Heart right ventricle (tissue), 16 donors: ENCODE measurements at regions of chr19 and their contacts with region 1.

Region 1: DNA sequence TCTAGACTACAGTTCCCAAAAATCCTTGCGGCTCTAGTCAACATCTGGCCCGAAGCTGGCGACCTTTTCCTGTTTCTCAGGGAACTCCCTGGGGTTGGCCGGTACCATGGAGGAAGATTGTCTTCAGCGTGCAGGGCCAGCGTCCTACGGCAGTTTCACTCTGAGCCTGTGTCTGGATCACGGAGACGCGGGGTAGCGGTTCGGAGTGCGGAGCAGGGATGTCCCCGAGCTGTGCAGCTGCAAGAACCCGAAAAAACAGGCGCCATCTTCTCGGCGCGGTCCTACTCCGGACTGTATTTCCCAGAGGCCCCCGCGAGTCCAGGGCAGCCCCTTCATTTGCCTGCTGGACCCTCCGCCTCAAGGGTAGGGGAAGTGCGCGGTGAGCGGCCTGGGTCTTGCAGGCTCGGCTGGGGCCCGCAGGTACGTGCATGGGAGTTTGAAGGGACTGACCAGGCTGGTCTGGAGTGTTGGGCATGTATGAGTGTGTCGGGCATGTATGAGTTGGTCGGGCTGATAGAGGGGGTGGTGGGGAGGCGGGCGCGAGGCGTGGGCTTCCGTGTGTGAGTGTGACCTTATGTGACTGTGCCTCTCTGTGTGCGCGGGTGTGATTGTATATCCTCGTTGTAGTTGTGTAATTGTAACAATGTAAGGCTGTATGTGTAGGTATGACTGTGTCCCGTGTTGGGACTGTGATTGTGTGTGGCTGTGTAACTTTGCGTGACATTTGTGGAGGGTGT is at the start of gene ZNF383:
- DNase-seq: peak; percentile 87 to 91
- ATAC-seq: peak; percentile 97 to 99 (median 98)
- H3K4me3 ChIP-seq: peak within 1 kb of the TSS; percentile 61 to 85 (median 74)
- H3K27ac ChIP-seq: peak within 1 kb of the TSS; percentile 88 to 97 (median 93)
- H3K4me1 ChIP-seq: peaks cover 0 to 23% (median 13%) of the 10 kb centered on the region in 9 donors
- H3K27me3 ChIP-seq: no peaks in the 10 kb centered on the region
- CTCF ChIP-seq: peak in 1 of 9 donors; percentile 6
- total RNA-seq, gene ZNF383: 8.1 to 12.7 (median 9.1) TPM

Region 2: DNA sequence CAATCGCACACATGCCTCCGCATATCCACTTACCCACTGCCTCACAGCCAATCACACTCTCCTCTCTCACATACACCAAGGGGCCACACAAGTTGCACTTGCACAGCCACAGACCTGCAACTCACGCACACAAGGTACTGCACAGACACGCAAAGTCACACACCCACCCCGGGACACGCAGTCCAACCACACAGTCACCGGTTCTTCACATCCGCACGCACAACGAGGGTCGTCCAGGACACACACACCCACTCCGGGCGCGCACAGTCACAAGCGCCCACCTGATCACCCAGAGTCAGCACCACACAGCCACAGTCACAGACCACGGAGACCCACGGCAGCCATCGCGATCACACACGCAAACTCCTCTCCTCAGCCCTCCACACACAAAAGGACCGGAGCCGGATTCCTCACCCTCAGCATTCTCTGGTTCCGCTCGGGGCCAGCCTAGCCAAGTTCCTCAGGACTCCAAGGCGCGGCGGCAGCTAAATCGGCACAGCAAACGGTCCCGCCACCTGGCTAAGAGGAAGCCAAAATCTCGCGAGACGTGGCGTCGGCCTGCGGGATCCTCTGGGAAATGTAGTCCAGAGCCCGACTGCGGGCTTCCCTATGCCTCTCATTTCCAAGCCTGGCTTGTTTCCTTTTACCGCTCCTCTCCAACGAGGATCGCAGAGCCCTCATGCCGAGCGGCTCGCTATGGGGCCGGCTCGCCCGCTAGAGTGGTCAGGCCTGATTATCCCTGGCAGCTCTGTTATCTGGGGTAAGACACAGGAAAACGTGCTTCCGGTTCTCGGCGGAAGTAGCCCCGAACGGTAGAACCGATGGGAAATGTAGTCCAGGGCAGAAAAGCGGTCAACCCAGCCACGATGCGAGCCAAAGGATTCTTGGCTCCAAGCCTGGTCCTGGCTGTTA is 445.5 kb before region 1 on chr19 and contains the start of gene ZNF850:
- intact Hi-C with region 1: no loop called
- DNase-seq: peak; percentile 96
- ATAC-seq: peak; percentile 94 to 98 (median 98)
- H3K4me3 ChIP-seq: peak within 1 kb of the TSS; percentile 26 to 96 (median 72)
- H3K27ac ChIP-seq: peak within 1 kb of the TSS; percentile 20 to 92 (median 85)
- H3K4me1 ChIP-seq: peaks cover 0 to 26% (median 17%) of the 10 kb centered on the region in 9 donors
- H3K27me3 ChIP-seq: no peaks in the 10 kb centered on the region
- CTCF ChIP-seq: no peak
- total RNA-seq, gene ZNF850: 1.9 to 7.9 (median 4.7) TPM

Region 3: GRCh38 chr19:37077934-37078725 is 139.9 kb before region 1 on chr19 and contains the start of gene ZNF420:
- intact Hi-C with region 1: loop called in 1 of 10 experiments (anchors 5 kb)
- DNase-seq: peak; percentile 93 to 95
- ATAC-seq: peak; percentile 98 to 99 (median 99)
- H3K4me3 ChIP-seq: peak within 1 kb of the TSS; percentile 61 to 98 (median 80)
- H3K27ac ChIP-seq: peak within 1 kb of the TSS; percentile 60 to 92 (median 88)
- H3K4me1 ChIP-seq: peaks cover 2 to 33% (median 22%) of the 10 kb centered on the region in 9 donors
- H3K27me3 ChIP-seq: no peaks in the 10 kb centered on the region
- CTCF ChIP-seq: peak in 2 of 9 donors; percentile 18 to 25
- total RNA-seq, gene ZNF420: 5.2 to 12.5 (median 8.5) TPM

Region 4: GRCh38 chr19:37251308-37252229 is 33.5 kb after region 1 on chr19:
- intact Hi-C with region 1: no loop called
- DNase-seq: peak; percentile 85 to 94
- ATAC-seq: peak; percentile 97 to 100 (median 99)
- H3K4me3 ChIP-seq: peak overlapping the region; percentile 57 to 81 (median 69)
- H3K27ac ChIP-seq: peak overlapping the region; percentile 39 to 90 (median 79)
- H3K4me1 ChIP-seq: peaks cover 0 to 18% (median 4%) of the 10 kb centered on the region in 9 donors
- H3K27me3 ChIP-seq: no peaks in the 10 kb centered on the region
- CTCF ChIP-seq: no peak

Region 5: GRCh38 chr19:37309834-37310575 is 92.0 kb after region 1 on chr19:
- intact Hi-C with region 1: loop called in 1 of 10 experiments (anchors 10 kb)
- DNase-seq: no peak
- ATAC-seq: no peak
- H3K4me3 ChIP-seq: no peak overlapping the region
- H3K27ac ChIP-seq: no peak overlapping the region
- H3K4me1 ChIP-seq: peaks cover 0 to 11% (median 5%) of the 10 kb centered on the region in 9 donors
- H3K27me3 ChIP-seq: no peaks in the 10 kb centered on the region
- CTCF ChIP-seq: peak in 1 of 9 donors; percentile 11

Region 6: DNA sequence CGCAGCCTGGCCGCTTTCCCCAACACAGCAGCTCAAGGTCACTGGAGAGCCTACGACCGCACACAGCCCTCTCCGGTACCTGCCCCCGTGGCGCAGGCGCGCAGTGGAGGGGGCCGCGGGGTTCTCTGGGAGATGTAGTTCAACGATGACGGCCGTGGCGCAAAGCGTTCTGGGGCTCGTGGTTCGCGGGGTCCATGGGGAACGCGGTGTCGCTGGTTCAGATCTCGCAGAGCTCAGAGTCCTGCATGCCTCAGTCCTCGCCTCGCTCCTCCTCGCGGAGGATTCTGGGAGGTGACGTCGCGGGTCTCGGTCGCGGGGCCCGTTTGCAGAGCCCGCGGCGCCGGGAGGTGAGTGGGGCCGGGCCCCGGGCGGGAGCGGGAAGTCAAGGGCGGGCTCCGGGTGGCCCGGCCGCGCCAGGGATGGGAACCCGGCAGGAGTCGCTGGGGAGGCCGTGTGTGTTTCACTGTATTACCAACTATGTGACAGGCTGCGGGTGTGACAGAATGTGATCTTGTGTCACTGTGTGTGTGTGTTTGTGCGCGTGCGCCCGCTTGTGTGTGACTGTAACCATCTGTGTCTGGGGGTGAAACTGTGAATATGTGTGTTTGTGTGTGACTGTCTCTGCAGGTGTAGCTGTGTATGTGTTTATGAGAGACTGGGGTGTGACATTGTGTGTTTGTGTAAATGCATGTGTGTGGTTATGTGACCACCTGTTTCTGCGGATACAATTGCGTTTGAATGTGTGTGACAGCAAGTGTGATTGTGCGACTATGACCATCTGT is 153.0 kb after region 1 on chr19 and contains the start of gene ZNF527:
- intact Hi-C with region 1: loop called in 1 of 10 experiments (anchors 5 kb)
- DNase-seq: peak; percentile 98
- ATAC-seq: peak; percentile 98 to 100 (median 99)
- H3K4me3 ChIP-seq: peak within 1 kb of the TSS; percentile 45 to 83 (median 66)
- H3K27ac ChIP-seq: peak within 1 kb of the TSS; percentile 63 to 92 (median 83)
- H3K4me1 ChIP-seq: peaks cover 0 to 20% (median 11%) of the 10 kb centered on the region in 9 donors
- H3K27me3 ChIP-seq: no peaks in the 10 kb centered on the region
- CTCF ChIP-seq: peak in 3 of 9 donors; percentile 10 to 33 (median 29)
- total RNA-seq, gene ZNF527: 3.6 to 7.9 (median 6.1) TPM